Heart right ventricle (tissue), 16 donors: ENCODE measurements at regions of chr2 and their contacts with region 1.

Region 1: GRCh38 chr2:174023591-174024523 is 58.7 kb upstream of the SP3 start:
- DNase-seq: peak; percentile 48 to 50
- ATAC-seq: peak; percentile 8 to 76 (median 47)
- H3K4me3 ChIP-seq: peak overlapping the region in 1 of 10 donors; percentile 14
- H3K27ac ChIP-seq: peak overlapping the region; percentile 72 to 92 (median 88)
- H3K4me1 ChIP-seq: peaks cover 13 to 88% (median 52%) of the 10 kb centered on the region in 9 donors
- H3K27me3 ChIP-seq: no peaks in the 10 kb centered on the region
- CTCF ChIP-seq: no peak

Region 2: DNA sequence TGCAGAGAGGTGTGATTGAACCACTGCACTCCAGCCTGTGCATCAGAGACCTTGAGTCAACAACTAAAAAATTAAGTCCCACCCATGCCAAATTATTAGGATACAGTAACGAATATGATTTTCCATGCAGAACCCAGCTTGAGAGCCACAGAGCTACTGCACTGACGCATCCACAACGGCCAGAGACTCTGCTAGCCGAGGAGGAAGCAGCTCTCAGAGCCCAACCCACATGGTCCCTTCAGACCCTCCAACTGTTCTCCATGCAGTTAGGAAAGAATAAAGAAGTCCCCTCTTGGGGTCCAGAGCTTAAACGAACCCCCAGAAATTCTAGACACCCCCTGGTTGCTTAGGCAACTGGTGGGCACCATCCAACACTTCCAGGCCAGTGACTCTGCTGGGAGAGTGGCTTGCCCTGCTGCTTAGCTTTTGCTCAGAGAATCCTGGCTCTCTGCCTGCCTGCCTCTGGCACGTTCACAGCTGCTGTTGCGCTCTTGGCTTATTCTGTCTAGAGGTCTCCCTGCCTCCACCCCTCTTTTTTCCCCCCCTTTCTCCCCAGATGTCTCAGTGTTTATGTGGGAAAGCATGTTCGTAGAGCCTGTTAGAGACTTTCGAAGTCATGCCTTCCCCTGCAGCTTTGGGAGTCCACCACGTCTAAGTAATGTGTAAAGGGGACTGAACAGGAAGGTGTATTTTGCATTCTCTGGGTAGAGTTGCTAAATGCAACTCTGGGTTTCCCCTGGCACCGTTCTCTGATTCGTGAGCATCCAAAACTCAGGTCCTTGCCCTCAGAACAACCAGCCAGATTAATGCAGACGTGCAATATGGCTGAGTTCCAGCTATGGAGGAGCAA is 32.7 kb before region 1 on chr2:
- intact Hi-C with region 1: loop called in 2 of 10 experiments (anchors 2 to 5 kb)
- DNase-seq: peak; percentile 83 to 88
- ATAC-seq: peak; percentile 66 to 91 (median 72)
- H3K4me3 ChIP-seq: peak overlapping the region in 1 of 10 donors; percentile 6
- H3K27ac ChIP-seq: peak overlapping the region; percentile 45 to 87 (median 68)
- H3K4me1 ChIP-seq: peaks cover 28 to 70% (median 49%) of the 10 kb centered on the region in 9 donors
- H3K27me3 ChIP-seq: no peaks in the 10 kb centered on the region
- CTCF ChIP-seq: no peak